ENCODE measurements at regions of chr17 and their contacts with region 1.

Region 1: DNA sequence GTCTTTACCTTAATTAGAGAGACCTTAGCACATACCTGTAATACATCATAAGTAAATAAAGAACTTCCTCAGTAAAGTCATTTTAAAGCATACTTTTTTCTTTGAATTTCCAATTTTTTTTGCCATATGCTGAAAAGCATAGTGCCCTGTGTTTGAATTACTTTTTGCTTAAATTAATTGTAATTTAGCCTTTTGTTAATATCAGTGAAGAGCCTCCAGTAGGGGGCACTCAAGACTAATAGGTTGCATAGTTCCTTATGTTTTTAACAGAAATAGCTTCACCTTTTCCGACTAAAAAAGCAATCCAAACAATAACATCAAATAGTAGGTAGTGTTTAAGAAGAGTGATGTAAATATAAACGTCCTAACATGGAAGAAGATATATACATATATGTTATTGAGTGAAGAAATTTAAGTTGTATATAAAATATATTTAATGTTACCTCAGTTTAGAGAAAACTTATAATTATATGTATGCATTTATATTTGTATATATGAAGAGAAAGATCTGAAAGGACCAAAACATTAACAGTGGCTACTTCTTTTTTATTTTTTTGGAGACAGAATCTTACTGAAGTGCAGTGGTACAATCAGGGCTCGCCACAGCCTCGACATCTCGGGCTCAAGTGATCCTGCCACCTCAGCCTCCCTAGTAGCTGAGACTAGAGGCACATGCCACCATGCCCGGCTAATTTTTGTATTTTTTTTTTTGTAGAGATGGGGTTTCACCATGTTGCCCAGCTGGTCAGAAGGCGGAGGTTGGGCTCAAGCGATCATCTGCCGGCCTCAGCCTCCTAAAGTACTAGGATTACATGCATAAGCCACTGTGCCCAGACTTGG is 18.8 kb downstream of the RAD51C start:
- DNase-seq: no peak
- ATAC-seq: no peak
- H3K4me3 ChIP-seq: no peak overlapping the region
- H3K27ac ChIP-seq: no peak overlapping the region
- H3K4me1 ChIP-seq: no peaks in the 10 kb centered on the region
- H3K27me3 ChIP-seq: no peaks in the 10 kb centered on the region

Region 2: DNA sequence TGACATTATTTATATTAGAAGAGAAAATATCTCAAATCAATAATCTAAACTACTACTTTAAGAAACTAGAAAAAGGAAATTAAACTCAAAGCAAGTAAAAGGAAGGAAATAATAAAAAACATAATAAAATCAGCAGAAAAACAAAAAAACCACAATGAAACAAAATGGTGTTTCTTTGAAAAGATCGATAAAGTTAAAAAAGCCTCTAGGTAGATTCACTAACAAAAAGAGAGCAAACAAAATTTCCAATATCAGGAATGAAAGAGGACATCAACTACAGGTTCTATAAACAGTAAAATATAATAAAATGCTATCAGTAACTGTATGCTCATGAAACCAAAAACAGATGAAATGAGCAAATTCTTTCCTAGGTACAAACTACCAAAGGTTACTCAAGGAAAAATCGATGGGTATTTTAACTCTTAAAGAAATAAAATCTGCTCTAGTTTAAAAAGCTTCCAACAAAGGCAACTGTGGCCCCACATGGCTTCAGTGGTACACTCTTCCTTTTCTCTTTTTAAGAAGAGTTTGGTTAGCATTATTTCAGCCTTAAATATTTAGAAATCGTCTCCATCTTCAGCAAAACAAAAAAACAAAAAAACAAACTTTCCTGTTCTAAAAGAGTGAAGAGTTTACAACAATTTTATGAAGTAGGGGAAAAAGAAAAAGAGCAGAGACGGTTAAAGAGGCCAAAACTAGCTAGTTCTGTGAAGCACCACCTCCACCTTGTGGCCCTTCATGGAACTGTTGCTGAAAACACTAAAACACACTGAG is 293.4 kb after region 1 on chr17:
- intact Hi-C with region 1: loop called (anchors 5 kb)
- DNase-seq: peak in 1 of 2 donors; percentile 51
- ATAC-seq: peak; percentile 87
- H3K4me3 ChIP-seq: no peak overlapping the region
- H3K27ac ChIP-seq: no peak overlapping the region
- H3K4me1 ChIP-seq: no peaks in the 10 kb centered on the region
- H3K27me3 ChIP-seq: no peaks in the 10 kb centered on the region